ENCODE measurements at regions of chr4 and their contacts with region 1.

Region 1: GRCh38 chr4:123776254-123776653 is 379.7 kb downstream of the SPRY1 start:
- DNase-seq: no peak
- H3K4me3 ChIP-seq: no peak overlapping the region
- H3K27ac ChIP-seq: no peak overlapping the region
- H3K4me1 ChIP-seq: no peaks in the 10 kb centered on the region
- H3K27me3 ChIP-seq: no peaks in the 10 kb centered on the region
- CTCF ChIP-seq: no peak

Region 2: GRCh38 chr4:123127218-123127617 is 649.0 kb before region 1 on chr4:
- CTCF ChIA-PET with region 1: interaction called, 4 read pairs
- dilution Hi-C with region 1: no loop called
- in situ Hi-C with region 1: no loop called
- intact Hi-C with region 1: loop called (anchors 2 kb)
- DNase-seq: peak; percentile 9
- H3K4me3 ChIP-seq: no peak overlapping the region
- H3K27ac ChIP-seq: peak overlapping the region; percentile 89
- H3K4me1 ChIP-seq: peaks cover 3% of the 10 kb centered on the region
- H3K27me3 ChIP-seq: no peaks in the 10 kb centered on the region
- CTCF ChIP-seq: peak; percentile 14 to 42

Region 3: GRCh38 chr4:123990318-123990870 is 214.1 kb after region 1 on chr4:
- CTCF ChIA-PET with region 1: no interaction called
- dilution Hi-C with region 1: no loop called
- in situ Hi-C with region 1: no loop called
- intact Hi-C with region 1: loop called (anchors 2 kb)
- DNase-seq: no peak
- H3K4me3 ChIP-seq: no peak overlapping the region
- H3K27ac ChIP-seq: no peak overlapping the region
- H3K4me1 ChIP-seq: peaks cover 15% of the 10 kb centered on the region
- H3K27me3 ChIP-seq: no peaks in the 10 kb centered on the region
- CTCF ChIP-seq: no peak

Region 4: DNA sequence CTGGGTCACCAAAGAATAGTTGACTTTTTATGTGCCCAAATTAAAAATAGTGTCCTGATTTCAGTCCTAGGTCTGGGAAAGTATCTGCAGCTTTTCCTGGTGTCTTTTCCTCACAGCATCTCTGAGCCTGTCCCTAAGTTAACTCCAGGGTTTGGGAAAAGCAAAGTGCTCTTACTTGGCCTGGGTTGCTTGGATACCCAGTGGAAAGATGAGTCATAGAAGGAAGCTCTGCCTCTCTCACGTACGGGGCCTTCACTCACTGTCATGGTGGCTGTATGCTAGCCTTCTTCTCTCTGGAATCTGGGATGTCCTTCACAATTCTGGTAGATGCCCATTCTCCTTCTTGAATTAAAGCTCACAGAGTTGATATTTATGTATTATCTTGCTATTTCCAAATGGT is 329.0 kb after region 1 on chr4:
- CTCF ChIA-PET with region 1: no interaction called
- dilution Hi-C with region 1: no loop called
- in situ Hi-C with region 1: loop called (anchors 10 to 25 kb)
- intact Hi-C with region 1: no loop called
- DNase-seq: no peak
- H3K4me3 ChIP-seq: no peak overlapping the region
- H3K27ac ChIP-seq: no peak overlapping the region
- H3K4me1 ChIP-seq: peaks cover 9% of the 10 kb centered on the region
- H3K27me3 ChIP-seq: no peaks in the 10 kb centered on the region
- CTCF ChIP-seq: no peak

Region 5: GRCh38 chr4:124322234-124323065 is 546.2 kb after region 1 on chr4:
- CTCF ChIA-PET with region 1: no interaction called
- dilution Hi-C with region 1: no loop called
- in situ Hi-C with region 1: no loop called
- intact Hi-C with region 1: loop called (anchors 1 kb)
- DNase-seq: peak; percentile 24
- H3K4me3 ChIP-seq: no peak overlapping the region
- H3K27ac ChIP-seq: no peak overlapping the region
- H3K4me1 ChIP-seq: no peaks in the 10 kb centered on the region
- H3K27me3 ChIP-seq: no peaks in the 10 kb centered on the region
- CTCF ChIP-seq: peak; percentile 42 to 48

Measured in mammary epithelial cell (primary cell).